Heart right ventricle (tissue), 16 donors: ENCODE measurements at regions of chr6 and their contacts with region 1.

Region 1: GRCh38 chr6:124371974-124372475 is 568.4 kb downstream of the NKAIN2 start:
- DNase-seq: no peak
- ATAC-seq: no peak
- H3K4me3 ChIP-seq: no peak overlapping the region
- H3K27ac ChIP-seq: no peak overlapping the region
- H3K4me1 ChIP-seq: no peaks in the 10 kb centered on the region
- H3K27me3 ChIP-seq: peaks cover 0 to 3% (median 0%) of the 10 kb centered on the region in 7 donors
- CTCF ChIP-seq: no peak

Region 2: GRCh38 chr6:124054034-124054433 is 318.0 kb before region 1 on chr6:
- intact Hi-C with region 1: no loop called
- DNase-seq: no peak
- ATAC-seq: no peak
- H3K4me3 ChIP-seq: no peak overlapping the region
- H3K27ac ChIP-seq: no peak overlapping the region
- H3K4me1 ChIP-seq: no peaks in the 10 kb centered on the region
- H3K27me3 ChIP-seq: no peaks in the 10 kb centered on the region
- CTCF ChIP-seq: no peak

Region 3: DNA sequence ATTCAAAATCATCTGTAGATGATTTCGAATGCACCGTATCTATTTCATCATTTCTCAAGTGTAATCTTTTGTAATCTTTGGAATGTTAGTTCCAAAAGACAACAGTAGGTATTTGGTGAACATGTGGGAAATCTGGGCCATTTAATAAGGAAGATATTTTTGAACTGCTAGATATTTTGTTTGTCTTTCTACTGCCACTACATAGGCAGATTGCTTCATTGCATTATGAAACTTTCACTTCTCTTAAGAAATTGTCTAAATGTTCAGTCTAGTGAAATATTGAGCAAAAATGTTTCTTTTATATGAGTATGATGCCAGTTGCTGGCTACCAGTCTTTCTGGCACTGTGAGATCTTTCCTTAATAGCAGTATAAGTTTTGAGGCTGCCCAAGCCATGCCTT is 62.4 kb after region 1 on chr6:
- intact Hi-C with region 1: no loop called
- DNase-seq: no peak
- ATAC-seq: no peak
- H3K4me3 ChIP-seq: no peak overlapping the region
- H3K27ac ChIP-seq: no peak overlapping the region
- H3K4me1 ChIP-seq: no peaks in the 10 kb centered on the region
- H3K27me3 ChIP-seq: no peaks in the 10 kb centered on the region
- CTCF ChIP-seq: no peak

Region 4: DNA sequence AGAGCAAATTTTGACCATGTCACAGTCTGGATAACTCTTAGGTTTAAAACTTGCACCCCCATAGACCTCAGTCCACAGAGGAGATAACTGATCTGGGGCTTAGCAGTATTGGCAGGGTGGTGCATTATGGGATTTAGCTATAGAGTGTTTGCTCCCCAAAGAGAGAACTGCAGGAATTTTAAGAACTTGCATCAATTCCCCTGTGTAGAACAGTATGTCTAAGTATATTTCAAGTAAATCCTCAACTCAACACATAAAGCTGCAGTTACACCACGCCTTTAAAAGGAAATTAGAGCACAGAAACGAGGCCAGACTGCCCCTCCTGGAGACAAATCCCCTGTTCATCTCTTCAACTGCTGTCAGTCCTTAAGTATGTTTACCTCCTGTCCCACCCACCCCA is 1759.2 kb after region 1 on chr6:
- intact Hi-C with region 1: loop called in 1 of 10 experiments (anchors 5 kb)
- DNase-seq: no peak
- ATAC-seq: no peak
- H3K4me3 ChIP-seq: no peak overlapping the region
- H3K27ac ChIP-seq: no peak overlapping the region
- H3K4me1 ChIP-seq: no peaks in the 10 kb centered on the region
- H3K27me3 ChIP-seq: peaks cover 0 to 42% (median 0%) of the 10 kb centered on the region in 7 donors
- CTCF ChIP-seq: no peak